Transverse colon (tissue), 4 donors: ENCODE measurements at regions of chr5 and their contacts with region 1.

Region 1: GRCh38 chr5:146965761-146966659 is 87.5 kb upstream of the PPP2R2B start:
- DNase-seq: peak; percentile 38
- H3K4me3 ChIP-seq: no peak overlapping the region
- H3K27ac ChIP-seq: no peak overlapping the region
- H3K4me1 ChIP-seq: peaks cover 0 to 3% (median 0%) of the 10 kb centered on the region in 4 donors
- H3K27me3 ChIP-seq: no peaks in the 10 kb centered on the region
- CTCF ChIP-seq: peak; percentile 81 to 93 (median 88)
- EP300 ChIP-seq: no peak
- POLR2A ChIP-seq: no peak

Region 2: GRCh38 chr5:146541958-146542849 is 423.8 kb before region 1 on chr5:
- in situ Hi-C with region 1: loop called (anchors 5 to 10 kb)
- intact Hi-C with region 1: loop called (anchors 5 kb)
- DNase-seq: peak; percentile 77
- H3K4me3 ChIP-seq: no peak overlapping the region
- H3K27ac ChIP-seq: no peak overlapping the region
- H3K4me1 ChIP-seq: no peaks in the 10 kb centered on the region
- H3K27me3 ChIP-seq: peaks cover 7% of the 10 kb centered on the region
- CTCF ChIP-seq: peak; percentile 76 to 83 (median 79)
- EP300 ChIP-seq: no peak
- POLR2A ChIP-seq: no peak

Region 3: GRCh38 chr5:146662229-146662628 is 303.8 kb before region 1 on chr5:
- in situ Hi-C with region 1: loop called in 3 of 4 experiments (anchors 10 to 25 kb)
- intact Hi-C with region 1: no loop called
- DNase-seq: no peak
- H3K4me3 ChIP-seq: no peak overlapping the region
- H3K27ac ChIP-seq: no peak overlapping the region
- H3K4me1 ChIP-seq: peaks cover 0 to 2% (median 0%) of the 10 kb centered on the region in 4 donors
- H3K27me3 ChIP-seq: no peaks in the 10 kb centered on the region
- CTCF ChIP-seq: peak; percentile 8 to 56 (median 34)
- EP300 ChIP-seq: no peak
- POLR2A ChIP-seq: no peak